GM12878 (cell line): ENCODE measurements at regions of chr1 and their contacts with region 1.

Region 1: DNA sequence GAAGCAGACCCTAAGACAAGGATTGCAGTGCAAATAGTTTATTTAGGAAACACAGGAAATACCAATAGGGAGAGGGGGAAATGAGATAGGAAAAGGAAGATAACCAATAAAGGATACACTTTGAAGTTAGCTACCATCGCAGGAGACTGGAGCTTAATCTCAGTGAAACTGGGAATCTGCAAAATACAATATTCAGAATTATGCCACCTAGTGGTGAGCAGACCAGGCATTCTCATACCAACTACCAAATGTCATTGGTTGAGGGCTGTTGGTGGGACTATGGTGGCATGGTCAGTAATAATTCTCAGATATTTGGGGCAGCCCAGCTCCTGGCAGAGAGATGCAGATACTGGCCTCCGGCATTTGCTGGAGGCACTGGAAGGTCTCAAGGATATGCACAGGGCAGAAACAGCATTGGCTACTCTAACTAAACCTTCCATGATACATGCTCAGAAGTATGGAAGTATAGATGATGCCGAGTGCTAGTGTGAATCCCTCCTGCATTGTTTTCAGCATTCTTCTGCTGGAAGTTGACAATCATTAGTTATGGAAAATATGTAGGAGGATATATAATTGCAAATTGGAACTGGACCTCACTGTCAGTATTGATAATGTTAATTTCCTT is 11.8 kb upstream of the ZFP69B start:
- DNase-seq: no peak
- ATAC-seq: peak; percentile 84
- H3K4me3 ChIP-seq: no peak overlapping the region
- H3K27ac ChIP-seq: no peak overlapping the region
- H3K4me1 ChIP-seq: no peaks in the 10 kb centered on the region
- H3K27me3 ChIP-seq: no peaks in the 10 kb centered on the region
- CTCF ChIP-seq: peak; percentile 48 to 63 (median 53)
- EP300 ChIP-seq: no peak
- POLR2A ChIP-seq: no peak
- RAD21 ChIP-seq: peak; percentile 35; the same call in 1 of the 2 replicates

Region 2: GRCh38 chr1:39988618-39989351 is 449.7 kb before region 1 on chr1:
- CTCF ChIA-PET with region 1: no interaction called
- POLR2A ChIA-PET with region 1: no interaction called
- RAD21 ChIA-PET with region 1: no interaction called
- SMC1A ChIA-PET with region 1: no interaction called
- in situ Hi-C with region 1: no loop called
- intact Hi-C with region 1: no loop called
- DNase-seq: no peak
- ATAC-seq: no peak
- H3K4me3 ChIP-seq: no peak overlapping the region
- H3K27ac ChIP-seq: no peak overlapping the region
- H3K4me1 ChIP-seq: peaks cover 11% of the 10 kb centered on the region; the same call in 1 of the 2 replicates
- H3K27me3 ChIP-seq: no peaks in the 10 kb centered on the region
- CTCF ChIP-seq: no peak
- EP300 ChIP-seq: no peak
- POLR2A ChIP-seq: no peak
- RAD21 ChIP-seq: no peak

Region 3: GRCh38 chr1:40421431-40422384 is 16.8 kb before region 1 on chr1:
- CTCF ChIA-PET with region 1: interaction called, 31 read pairs
- POLR2A ChIA-PET with region 1: interaction called, 3 read pairs
- RAD21 ChIA-PET with region 1: no interaction called
- SMC1A ChIA-PET with region 1: interaction called, 5 read pairs
- in situ Hi-C with region 1: no loop called
- intact Hi-C with region 1: no loop called
- DNase-seq: no peak
- ATAC-seq: no peak
- H3K4me3 ChIP-seq: no peak overlapping the region
- H3K27ac ChIP-seq: no peak overlapping the region
- H3K4me1 ChIP-seq: no peaks in the 10 kb centered on the region; the same call in 1 of the 2 replicates
- H3K27me3 ChIP-seq: no peaks in the 10 kb centered on the region
- CTCF ChIP-seq: no peak
- EP300 ChIP-seq: no peak
- POLR2A ChIP-seq: no peak
- RAD21 ChIP-seq: no peak

Region 4: DNA sequence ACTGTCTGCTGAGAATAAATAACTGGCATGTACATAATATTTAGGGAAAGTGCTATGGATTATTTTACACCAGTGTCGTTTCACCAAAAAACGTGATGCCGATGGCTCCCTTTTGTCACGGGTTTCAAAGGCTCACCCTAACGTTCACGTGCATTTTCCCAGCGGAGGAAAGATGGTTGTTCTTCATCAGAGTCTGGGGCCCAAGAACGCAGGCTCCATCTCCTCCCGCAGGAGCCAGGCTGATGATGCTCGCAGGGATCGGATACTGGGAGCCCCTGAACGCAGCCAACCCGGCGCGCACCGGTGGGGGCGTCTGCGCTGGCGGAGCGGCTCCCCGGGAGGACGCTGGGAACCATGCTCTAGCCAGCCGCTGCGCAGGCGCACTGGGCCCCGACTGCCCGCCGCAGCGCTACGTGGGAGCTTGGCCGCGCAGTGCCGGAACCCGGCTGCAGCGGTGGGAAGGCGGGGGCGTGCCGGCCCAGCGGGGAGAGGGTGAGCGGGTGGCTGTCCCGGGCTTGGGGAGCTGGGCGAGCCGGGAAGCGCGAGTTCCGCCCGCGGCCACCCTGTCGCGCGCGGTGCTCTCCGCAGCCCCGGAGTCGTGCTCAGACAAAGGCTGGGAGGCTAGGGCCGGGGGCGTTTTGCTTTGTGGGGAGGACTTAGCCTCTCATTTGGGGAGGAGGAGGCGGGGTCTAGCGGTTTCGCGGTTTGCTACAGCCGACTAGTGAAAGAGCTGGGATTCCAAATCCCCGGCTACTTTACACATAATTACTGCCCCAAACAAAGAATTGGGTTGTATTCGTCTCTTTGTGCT is 11.4 kb after region 1 on chr1 and contains the start of gene ZFP69B:
- CTCF ChIA-PET with region 1: interaction called, 36 read pairs
- POLR2A ChIA-PET with region 1: interaction called, 4 read pairs
- RAD21 ChIA-PET with region 1: no interaction called
- SMC1A ChIA-PET with region 1: interaction called, 6 read pairs
- in situ Hi-C with region 1: no loop called
- intact Hi-C with region 1: no loop called
- DNase-seq: peak; percentile 69
- ATAC-seq: peak; percentile 91
- H3K4me3 ChIP-seq: peak within 1 kb of the TSS; percentile 63
- H3K27ac ChIP-seq: peak within 1 kb of the TSS; percentile 83
- H3K4me1 ChIP-seq: no peaks in the 10 kb centered on the region
- H3K27me3 ChIP-seq: no peaks in the 10 kb centered on the region
- CTCF ChIP-seq: peak in 2 of 3 experiments; percentile 11 to 17; a peak in 2 of 6 replicates
- EP300 ChIP-seq: no peak
- POLR2A ChIP-seq: peak; percentile 91
- RAD21 ChIP-seq: no peak
- polyA plus RNA-seq, gene ZFP69B: 1.3 to 1.4 TPM